ENCODE measurements at regions of chr6 and their contacts with region 1.

Region 1: GRCh38 chr6:99746261-99746895 is 139.7 kb downstream of the PRDM13 start:
- DNase-seq: peak; percentile 23 to 77
- ATAC-seq: peak; percentile 96 to 100 (median 98)
- H3K4me3 ChIP-seq: no peak overlapping the region
- H3K27ac ChIP-seq: peak overlapping the region; percentile 33
- H3K4me1 ChIP-seq: peaks cover 4% of the 10 kb centered on the region
- H3K27me3 ChIP-seq: no peaks in the 10 kb centered on the region
- CTCF ChIP-seq: peak; percentile 93

Region 2: GRCh38 chr6:99330159-99330558 is 416.2 kb before region 1 on chr6:
- intact Hi-C with region 1: loop called in 1 of 2 experiments (anchors 10 kb)
- DNase-seq: no peak
- ATAC-seq: peak; percentile 59 to 84 (median 69)
- H3K4me3 ChIP-seq: no peak overlapping the region
- H3K27ac ChIP-seq: no peak overlapping the region
- H3K4me1 ChIP-seq: no peaks in the 10 kb centered on the region
- H3K27me3 ChIP-seq: peaks cover 0 to 5% (median 0%) of the 10 kb centered on the region in 3 donors
- CTCF ChIP-seq: peak; percentile 62

Region 3: DNA sequence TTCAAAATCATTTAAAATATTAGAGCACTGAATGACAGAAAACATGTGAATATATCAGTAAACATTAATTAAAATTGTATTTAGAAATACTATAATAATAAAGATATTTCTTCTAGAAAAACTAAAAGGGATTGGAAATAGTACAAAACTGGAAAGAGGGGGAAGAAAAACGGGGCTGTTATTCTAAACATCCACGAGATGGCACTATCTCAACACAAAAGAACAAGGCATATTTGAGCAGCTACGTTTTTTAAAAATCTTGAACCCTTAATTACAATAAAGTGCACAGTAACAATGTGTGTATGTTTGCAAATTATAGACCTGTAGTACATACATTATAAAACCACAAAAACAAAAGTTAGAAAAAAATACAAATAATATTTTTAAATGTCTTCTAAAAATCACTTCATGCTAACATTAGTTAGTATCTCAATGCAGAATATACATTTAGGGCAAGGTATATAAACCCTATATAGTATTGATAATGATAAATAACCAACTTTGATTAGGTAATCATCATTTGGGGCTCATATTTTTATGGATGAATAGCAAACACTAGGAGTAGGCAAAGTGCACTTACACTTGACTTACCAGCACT is 278.8 kb before region 1 on chr6:
- intact Hi-C with region 1: loop called (anchors 2 to 5 kb)
- DNase-seq: no peak
- ATAC-seq: peak in 2 of 4 donors; percentile 43 to 74
- H3K4me3 ChIP-seq: no peak overlapping the region
- H3K27ac ChIP-seq: no peak overlapping the region
- H3K4me1 ChIP-seq: no peaks in the 10 kb centered on the region
- H3K27me3 ChIP-seq: no peaks in the 10 kb centered on the region
- CTCF ChIP-seq: peak; percentile 70

Region 4: GRCh38 chr6:99568103-99568933 is 178.1 kb before region 1 on chr6 and contains the start of gene CCNC:
- intact Hi-C with region 1: no loop called
- DNase-seq: peak; percentile 92 to 96
- ATAC-seq: peak; percentile 97 to 99 (median 99)
- H3K4me3 ChIP-seq: peak within 1 kb of the TSS; percentile 97
- H3K27ac ChIP-seq: peak within 1 kb of the TSS; percentile 90
- H3K4me1 ChIP-seq: peaks cover 28% of the 10 kb centered on the region
- H3K27me3 ChIP-seq: no peaks in the 10 kb centered on the region
- CTCF ChIP-seq: no peak
- total RNA-seq, gene CCNC: 15.2 to 24.5 (median 19.3) TPM

Region 5: GRCh38 chr6:99588618-99589289 is 157.6 kb before region 1 on chr6:
- intact Hi-C with region 1: loop called (anchors 5 kb)
- DNase-seq: peak; percentile 66 to 85
- ATAC-seq: peak; percentile 92 to 98 (median 96)
- H3K4me3 ChIP-seq: peak overlapping the region; percentile 66
- H3K27ac ChIP-seq: no peak overlapping the region
- H3K4me1 ChIP-seq: peaks cover 10% of the 10 kb centered on the region
- H3K27me3 ChIP-seq: peaks cover 8 to 71% (median 16%) of the 10 kb centered on the region in 3 donors
- CTCF ChIP-seq: peak; percentile 58

Measured in psoas muscle (tissue), 8 donors.